PC-3 (cell line): ENCODE measurements at regions of chr14 and their contacts with region 1.

Region 1: GRCh38 chr14:94136575-94137331 is 7.3 kb upstream of the IFI27L2 start:
- DNase-seq: peak; percentile 90
- ATAC-seq: peak; percentile 96
- H3K4me3 ChIP-seq: no peak overlapping the region
- H3K27ac ChIP-seq: no peak overlapping the region
- H3K4me1 ChIP-seq: no peaks in the 10 kb centered on the region
- H3K27me3 ChIP-seq: 0 out of 2 replicates have a peak, but pooled peaks cover 4% of the 10 kb centered on the region
- CTCF ChIP-seq: peak; percentile 92

Region 2: GRCh38 chr14:93023039-93023438 is 1113.7 kb before region 1 on chr14:
- CTCF ChIA-PET with region 1: no interaction called
- POLR2A ChIA-PET with region 1: no interaction called
- intact Hi-C with region 1: no loop called
- DNase-seq: peak; percentile 22
- ATAC-seq: no peak; the same call in 1 of the 2 replicates
- H3K4me3 ChIP-seq: no peak overlapping the region
- H3K27ac ChIP-seq: no peak overlapping the region
- H3K4me1 ChIP-seq: no peaks in the 10 kb centered on the region
- H3K27me3 ChIP-seq: no peaks in the 10 kb centered on the region
- CTCF ChIP-seq: no peak

Region 3: GRCh38 chr14:93939304-93940229 is 197.2 kb before region 1 on chr14:
- CTCF ChIA-PET with region 1: interaction called, 8 read pairs
- POLR2A ChIA-PET with region 1: no interaction called
- intact Hi-C with region 1: loop called (anchors 2 kb)
- DNase-seq: peak; percentile 67
- ATAC-seq: peak; percentile 84
- H3K4me3 ChIP-seq: peak overlapping the region; percentile 42; the same call in 1 of the 2 replicates
- H3K27ac ChIP-seq: no peak overlapping the region
- H3K4me1 ChIP-seq: peaks cover 26% of the 10 kb centered on the region
- H3K27me3 ChIP-seq: no peaks in the 10 kb centered on the region
- CTCF ChIP-seq: peak; percentile 78

Region 4: GRCh38 chr14:94036313-94037050 is 100.3 kb before region 1 on chr14:
- CTCF ChIA-PET with region 1: interaction called, 44 read pairs
- POLR2A ChIA-PET with region 1: no interaction called
- intact Hi-C with region 1: loop called (anchors 1 kb)
- DNase-seq: peak; percentile 82
- ATAC-seq: peak; percentile 92
- H3K4me3 ChIP-seq: no peak overlapping the region
- H3K27ac ChIP-seq: no peak overlapping the region
- H3K4me1 ChIP-seq: peaks cover 9% of the 10 kb centered on the region
- H3K27me3 ChIP-seq: no peaks in the 10 kb centered on the region
- CTCF ChIP-seq: peak; percentile 83

Region 5: DNA sequence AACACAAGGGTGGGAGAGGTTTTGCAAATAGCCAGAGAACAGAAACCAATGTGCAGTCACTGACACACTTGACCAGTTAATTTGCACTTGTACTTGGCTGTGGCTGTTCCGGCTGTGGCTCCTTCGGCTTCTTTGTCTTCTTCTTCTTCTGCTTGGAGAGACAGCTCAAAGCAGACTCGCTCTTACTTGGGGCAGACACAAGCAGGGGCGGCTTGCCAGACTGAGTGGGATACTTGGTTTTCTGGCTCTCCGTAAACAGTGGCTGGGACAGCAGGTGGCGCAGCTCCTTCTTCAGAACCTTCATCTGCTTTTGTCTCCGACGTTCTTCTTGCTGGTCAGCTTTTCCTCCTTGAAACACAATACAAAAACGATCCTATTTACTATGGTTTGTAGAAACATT is 85.6 kb before region 1 on chr14:
- CTCF ChIA-PET with region 1: interaction called, 13 read pairs
- POLR2A ChIA-PET with region 1: no interaction called
- intact Hi-C with region 1: loop called (anchors 1 kb)
- DNase-seq: peak; percentile 21
- ATAC-seq: no peak
- H3K4me3 ChIP-seq: no peak overlapping the region
- H3K27ac ChIP-seq: no peak overlapping the region
- H3K4me1 ChIP-seq: no peaks in the 10 kb centered on the region
- H3K27me3 ChIP-seq: no peaks in the 10 kb centered on the region
- CTCF ChIP-seq: peak; percentile 53

Region 6: DNA sequence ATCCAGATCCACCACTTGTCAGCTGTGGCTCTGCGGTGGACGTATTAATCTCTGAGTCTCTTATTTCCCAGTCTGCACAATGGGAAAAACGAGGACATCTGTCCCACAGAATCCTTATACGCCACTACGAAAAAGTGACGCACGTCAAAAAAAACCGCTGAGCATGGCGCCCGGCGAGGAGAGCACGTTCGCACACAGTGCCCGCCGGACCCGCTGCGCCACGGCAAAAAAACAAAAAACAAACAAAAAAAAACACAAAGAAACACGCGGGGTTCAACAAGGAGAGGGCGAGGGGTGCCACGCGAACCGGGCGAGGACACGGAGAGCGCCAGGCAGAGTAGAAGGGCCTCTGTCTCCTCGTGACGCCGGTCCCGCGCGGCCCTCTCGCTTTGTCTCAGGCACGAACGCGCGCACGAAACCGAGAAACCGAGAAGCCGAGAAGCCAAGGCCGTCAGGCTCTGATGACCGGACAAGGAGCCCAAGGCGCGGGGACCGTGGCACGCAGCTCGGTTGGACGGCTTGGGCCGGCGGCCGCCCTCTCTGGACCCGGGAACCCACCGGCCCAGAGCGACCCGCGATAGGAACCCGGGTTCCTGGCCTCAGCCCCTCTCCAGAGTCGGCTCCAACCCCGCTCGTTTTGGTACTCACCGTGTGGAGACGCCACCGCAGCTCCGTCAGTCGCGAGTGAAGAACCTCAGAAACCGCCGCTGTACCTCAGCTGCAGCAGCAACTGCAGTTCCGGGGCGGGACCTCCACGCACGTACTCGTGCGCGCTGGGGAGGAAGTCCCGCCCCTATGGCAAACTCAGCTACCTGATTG is 56.1 kb before region 1 on chr14 and contains the start of gene DDX24:
- CTCF ChIA-PET with region 1: no interaction called
- POLR2A ChIA-PET with region 1: interaction called, 3 read pairs
- intact Hi-C with region 1: loop called (anchors 2 kb)
- DNase-seq: peak; percentile 95
- ATAC-seq: peak; percentile 96
- H3K4me3 ChIP-seq: peak within 1 kb of the TSS; percentile 92
- H3K27ac ChIP-seq: peak within 1 kb of the TSS; percentile 46
- H3K4me1 ChIP-seq: peaks cover 37% of the 10 kb centered on the region
- H3K27me3 ChIP-seq: no peaks in the 10 kb centered on the region
- CTCF ChIP-seq: no peak
- total RNA-seq, gene DDX24: 120 and 126 TPM in 2 replicates

Region 7: DNA sequence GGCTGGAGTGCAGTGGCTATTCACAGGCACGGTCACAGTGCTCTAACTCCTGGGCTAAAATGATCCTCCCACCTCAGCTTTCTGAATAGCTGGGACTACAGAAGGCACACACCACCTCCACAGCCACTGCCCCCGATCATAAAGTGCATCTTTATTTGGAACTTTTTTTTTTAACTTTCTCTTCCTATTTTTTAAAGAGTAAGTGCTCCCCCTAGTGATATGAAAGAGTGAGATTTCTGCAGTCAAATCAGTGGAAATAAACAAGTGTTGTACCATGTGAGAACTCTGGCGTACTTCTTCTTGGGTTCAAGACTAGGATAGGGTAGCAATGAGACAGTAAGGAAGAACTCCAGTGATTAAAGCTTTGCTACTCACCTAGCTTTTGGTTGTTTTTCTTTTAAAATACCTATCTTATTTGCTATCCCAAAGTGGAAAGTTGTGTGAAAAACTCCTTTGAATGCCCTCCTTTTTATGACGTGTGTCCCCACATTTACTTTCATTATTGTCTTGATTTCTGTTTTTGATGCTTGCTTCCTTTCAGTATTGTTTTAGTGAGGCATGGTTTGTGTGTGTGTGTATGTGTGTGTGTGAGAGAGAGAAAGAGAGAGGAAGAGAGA is 44.0 kb after region 1 on chr14:
- CTCF ChIA-PET with region 1: no interaction called
- POLR2A ChIA-PET with region 1: no interaction called
- intact Hi-C with region 1: loop called (anchors 2 kb)
- DNase-seq: peak; percentile 58
- ATAC-seq: no peak
- H3K4me3 ChIP-seq: no peak overlapping the region
- H3K27ac ChIP-seq: no peak overlapping the region
- H3K4me1 ChIP-seq: no peaks in the 10 kb centered on the region
- H3K27me3 ChIP-seq: peaks cover 39% of the 10 kb centered on the region
- CTCF ChIP-seq: peak; percentile 73